CD4-positive, alpha-beta memory T cell (primary cell): ENCODE measurements at regions of chr7 and their contacts with region 1.

Region 1: DNA sequence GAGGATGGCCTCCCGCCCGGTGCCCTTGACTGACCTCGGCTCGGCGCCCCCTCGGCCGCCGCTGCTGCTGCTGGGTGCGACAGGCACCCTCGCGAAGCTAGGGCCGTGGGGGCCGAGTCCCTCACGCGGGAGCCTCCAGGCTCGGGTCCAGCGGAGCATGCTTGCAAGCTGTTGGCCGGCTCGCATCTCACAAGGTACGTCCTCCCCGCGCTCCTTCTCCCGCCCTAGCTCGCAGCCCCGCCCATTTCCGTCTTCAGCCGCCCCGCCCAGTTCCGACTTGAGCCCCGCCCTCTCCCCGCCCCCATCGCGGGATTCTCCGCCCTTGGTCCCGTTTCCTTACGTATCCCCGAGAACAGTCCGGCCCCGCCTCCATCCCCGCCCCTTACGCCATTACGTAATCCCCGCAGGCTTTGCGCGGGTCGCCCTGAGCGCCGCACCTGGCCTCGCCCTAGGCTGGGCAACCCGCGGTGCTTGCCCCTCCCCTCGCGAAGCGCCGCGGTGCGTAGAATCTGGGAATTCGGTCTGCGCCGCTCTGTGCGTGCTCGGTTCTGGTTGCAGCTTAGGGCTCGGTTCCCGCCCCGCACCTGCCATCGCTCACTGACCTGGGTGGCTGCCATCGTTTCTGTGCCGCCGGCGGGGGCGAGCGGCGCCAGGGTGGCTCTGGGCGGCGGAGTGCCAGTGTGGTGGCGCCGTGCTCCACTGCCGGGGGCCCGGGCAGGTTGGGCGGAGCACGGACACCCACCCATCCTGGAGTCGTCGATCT is at the start of gene ABHD11:
- DNase-seq: peak; percentile 96 to 99 (median 97)
- H3K4me3 ChIP-seq: peak within 1 kb of the TSS; percentile 65 to 78
- H3K4me3 Mint-ChIP-seq: peak within 1 kb of the TSS; percentile 88 to 95 (median 91)
- H3K27ac ChIP-seq: peak within 1 kb of the TSS; percentile 75
- H3K27ac Mint-ChIP-seq: peak within 1 kb of the TSS; percentile 89 to 96 (median 94)
- H3K4me1 ChIP-seq: peaks cover 21% of the 10 kb centered on the region
- H3K4me1 Mint-ChIP-seq: peaks cover 6 to 26% (median 13%) of the 10 kb centered on the region in 4 donors
- H3K27me3 ChIP-seq: no peaks in the 10 kb centered on the region
- H3K27me3 Mint-ChIP-seq: no peaks in the 10 kb centered on the region
- total RNA-seq, gene ABHD11: 22.3 to 23.9 TPM

Region 2: DNA sequence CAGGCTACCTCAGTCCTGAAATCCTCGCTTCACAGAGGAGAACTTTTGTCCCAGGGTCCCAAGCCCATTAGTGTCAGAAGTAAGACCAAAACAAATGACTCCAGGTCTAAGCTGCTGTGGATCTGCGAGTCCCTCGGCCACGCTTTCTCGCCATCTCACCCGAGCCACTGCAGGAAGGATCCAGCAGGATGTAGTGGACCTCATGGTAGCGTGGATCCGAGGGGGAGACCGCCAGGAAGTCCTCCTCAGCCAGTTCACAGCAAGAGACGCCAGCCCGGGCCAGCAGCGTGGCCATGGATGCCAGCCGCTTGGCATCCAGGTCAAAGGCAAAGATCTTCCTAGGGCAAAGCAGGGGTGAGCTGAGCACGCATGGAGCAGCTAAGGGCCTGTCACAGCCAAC is 434.7 kb before region 1 on chr7:
- CTCF ChIA-PET with region 1: no interaction called
- POLR2A ChIA-PET with region 1: no interaction called
- intact Hi-C with region 1: no loop called
- DNase-seq: no peak
- H3K4me3 ChIP-seq: no peak overlapping the region
- H3K4me3 Mint-ChIP-seq: no peak overlapping the region
- H3K27ac ChIP-seq: no peak overlapping the region
- H3K27ac Mint-ChIP-seq: no peak overlapping the region
- H3K4me1 ChIP-seq: peaks cover 12% of the 10 kb centered on the region
- H3K4me1 Mint-ChIP-seq: peaks cover 16 to 34% (median 24%) of the 10 kb centered on the region in 4 donors
- H3K27me3 ChIP-seq: no peaks in the 10 kb centered on the region
- H3K27me3 Mint-ChIP-seq: no peaks in the 10 kb centered on the region

Region 3: DNA sequence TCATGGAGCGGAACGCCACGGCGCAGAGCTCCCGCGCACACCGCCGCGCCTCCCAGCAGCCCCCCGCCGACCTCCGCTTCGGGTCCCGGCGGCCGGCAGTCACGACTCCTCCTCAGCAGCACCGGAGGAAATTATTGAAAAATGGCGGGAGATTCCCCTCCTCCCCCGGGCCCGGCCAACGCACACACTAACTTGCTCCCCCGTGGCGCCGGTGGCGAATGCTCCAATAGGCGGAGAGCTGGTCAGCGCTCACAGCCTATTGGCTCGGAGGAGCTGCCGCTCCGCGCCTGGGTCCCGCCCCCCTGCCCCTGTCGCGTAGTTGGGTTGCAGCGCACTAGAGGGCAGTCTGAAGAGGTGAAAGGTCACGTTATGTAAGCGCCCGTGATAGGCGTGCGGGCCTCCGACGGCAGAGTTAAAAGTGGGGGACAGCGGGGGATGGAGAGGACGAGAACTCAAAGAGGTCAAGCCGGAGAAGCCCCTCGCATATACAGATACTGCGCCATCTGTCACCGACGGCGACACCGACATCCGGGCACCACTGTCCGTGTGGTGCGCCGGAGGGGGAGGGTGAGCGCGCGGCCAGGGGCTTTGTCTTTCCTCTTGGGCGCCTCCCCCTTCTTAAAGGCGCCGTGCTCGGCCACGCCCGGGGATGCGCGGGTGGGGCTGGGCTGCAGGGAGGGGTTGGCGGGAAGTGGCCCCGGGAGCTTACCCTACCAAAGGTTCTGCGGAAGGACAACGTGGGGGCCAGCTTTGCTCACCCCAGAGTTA is 216.5 kb before region 1 on chr7 and contains the start of gene BAZ1B:
- CTCF ChIA-PET with region 1: no interaction called
- POLR2A ChIA-PET with region 1: interaction called, 11 read pairs
- intact Hi-C with region 1: loop called (anchors 2 kb)
- DNase-seq: peak; percentile 94 to 98 (median 95)
- H3K4me3 ChIP-seq: peak within 1 kb of the TSS; percentile 57 to 75
- H3K4me3 Mint-ChIP-seq: peak within 1 kb of the TSS; percentile 95 to 99 (median 96)
- H3K27ac ChIP-seq: peak within 1 kb of the TSS; percentile 84
- H3K27ac Mint-ChIP-seq: peak within 1 kb of the TSS; percentile 96 to 100 (median 99)
- H3K4me1 ChIP-seq: peaks cover 69% of the 10 kb centered on the region
- H3K4me1 Mint-ChIP-seq: peaks cover 49 to 74% (median 57%) of the 10 kb centered on the region in 4 donors
- H3K27me3 ChIP-seq: no peaks in the 10 kb centered on the region
- H3K27me3 Mint-ChIP-seq: peaks cover 0 to 2% of the 10 kb centered on the region in 2 donors
- total RNA-seq, gene BAZ1B: 75.3 to 78.6 TPM

Region 4: GRCh38 chr7:73578342-73579127 is 160.3 kb before region 1 on chr7 and contains the start of gene TBL2:
- CTCF ChIA-PET with region 1: no interaction called
- POLR2A ChIA-PET with region 1: interaction called, 12 read pairs
- intact Hi-C with region 1: loop called (anchors 1 kb)
- DNase-seq: peak; percentile 98 to 99 (median 98)
- H3K4me3 ChIP-seq: peak within 1 kb of the TSS; percentile 60 to 78
- H3K4me3 Mint-ChIP-seq: peak within 1 kb of the TSS; percentile 87 to 99 (median 96)
- H3K27ac ChIP-seq: peak within 1 kb of the TSS; percentile 82
- H3K27ac Mint-ChIP-seq: peak within 1 kb of the TSS; percentile 86 to 99 (median 98)
- H3K4me1 ChIP-seq: peaks cover 29% of the 10 kb centered on the region
- H3K4me1 Mint-ChIP-seq: peaks cover 13 to 37% (median 22%) of the 10 kb centered on the region in 4 donors
- H3K27me3 ChIP-seq: no peaks in the 10 kb centered on the region
- H3K27me3 Mint-ChIP-seq: no peaks in the 10 kb centered on the region
- total RNA-seq, gene TBL2: 45.4 to 47.5 TPM

Region 5: GRCh38 chr7:73667344-73668102 is 71.3 kb before region 1 on chr7 and contains the start of gene VPS37D:
- CTCF ChIA-PET with region 1: interaction called, 3 read pairs
- POLR2A ChIA-PET with region 1: interaction called, 5 read pairs
- intact Hi-C with region 1: loop called (anchors 1 kb)
- DNase-seq: peak; percentile 87 to 96 (median 91)
- H3K4me3 ChIP-seq: peak within 1 kb of the TSS in 1 of 2 donors; percentile 44
- H3K4me3 Mint-ChIP-seq: peak within 1 kb of the TSS; percentile 70 to 81 (median 76)
- H3K27ac ChIP-seq: no peak within 1 kb of the TSS
- H3K27ac Mint-ChIP-seq: peak within 1 kb of the TSS in 6 of 7 donors; percentile 48 to 70 (median 54)
- H3K4me1 ChIP-seq: peaks cover 10% of the 10 kb centered on the region
- H3K4me1 Mint-ChIP-seq: peaks cover 4 to 12% (median 7%) of the 10 kb centered on the region in 4 donors
- H3K27me3 ChIP-seq: peaks cover 13% of the 10 kb centered on the region
- H3K27me3 Mint-ChIP-seq: peaks cover 19 to 31% of the 10 kb centered on the region in 2 donors
- total RNA-seq, gene VPS37D: not detected

Region 6: DNA sequence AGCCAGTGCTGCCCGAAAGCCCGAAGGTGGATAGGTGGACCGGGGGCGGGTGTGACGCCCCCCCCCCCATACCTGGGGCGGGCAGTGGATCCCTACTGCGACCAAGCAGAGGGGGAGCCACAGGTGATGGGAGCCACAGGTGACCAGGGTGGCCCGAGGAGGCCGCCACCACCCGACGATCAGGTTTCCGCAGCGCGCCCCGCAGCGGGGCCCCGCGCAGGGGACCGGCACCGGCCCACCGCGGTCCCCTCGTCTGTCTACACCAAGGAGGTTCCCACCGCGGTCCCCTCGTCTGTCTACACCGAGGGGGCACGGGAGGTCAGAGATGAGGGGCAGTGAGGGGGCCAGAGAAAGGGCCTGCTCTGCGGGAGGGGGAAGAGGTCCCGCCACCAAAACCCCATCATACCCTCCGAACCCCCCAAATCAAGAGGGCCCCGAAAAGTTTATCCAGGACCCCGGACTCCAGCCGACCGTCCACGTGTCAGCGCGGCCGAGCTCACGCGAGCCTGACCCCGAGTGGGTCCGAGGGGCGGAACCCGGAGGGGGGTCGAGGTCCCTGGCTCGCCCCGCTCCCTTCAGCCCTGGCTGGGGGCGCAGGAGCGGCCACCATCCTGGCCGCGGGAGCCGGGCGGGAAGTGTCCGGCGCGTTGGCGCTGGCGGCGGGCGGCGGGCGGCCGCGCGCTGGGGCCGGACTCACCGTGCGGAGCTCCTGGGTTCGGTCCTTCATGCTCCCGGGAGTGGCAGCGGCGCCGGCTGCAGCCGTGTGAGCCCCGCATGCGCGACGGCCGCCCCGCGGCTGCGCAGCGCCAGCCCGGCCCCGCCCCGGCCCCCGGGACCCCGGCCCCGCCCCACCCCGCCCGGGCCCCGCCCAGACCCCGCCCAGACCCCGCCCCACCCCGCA is 19.6 kb before region 1 on chr7 and contains the start of gene STX1A:
- CTCF ChIA-PET with region 1: interaction called, 8 read pairs
- POLR2A ChIA-PET with region 1: interaction called, 10 read pairs
- intact Hi-C with region 1: loop called (anchors 1 kb)
- DNase-seq: peak; percentile 65 to 78 (median 71)
- H3K4me3 ChIP-seq: peak within 1 kb of the TSS; percentile 65 to 76
- H3K4me3 Mint-ChIP-seq: peak within 1 kb of the TSS; percentile 84 to 92 (median 91)
- H3K27ac ChIP-seq: peak within 1 kb of the TSS; percentile 46
- H3K27ac Mint-ChIP-seq: peak within 1 kb of the TSS in 5 of 7 donors; percentile 68 to 90 (median 72)
- H3K4me1 ChIP-seq: peaks cover 34% of the 10 kb centered on the region
- H3K4me1 Mint-ChIP-seq: peaks cover 13 to 29% (median 20%) of the 10 kb centered on the region in 4 donors
- H3K27me3 ChIP-seq: no peaks in the 10 kb centered on the region
- H3K27me3 Mint-ChIP-seq: no peaks in the 10 kb centered on the region
- total RNA-seq, gene STX1A: 7.5 to 8.3 TPM

Region 7: DNA sequence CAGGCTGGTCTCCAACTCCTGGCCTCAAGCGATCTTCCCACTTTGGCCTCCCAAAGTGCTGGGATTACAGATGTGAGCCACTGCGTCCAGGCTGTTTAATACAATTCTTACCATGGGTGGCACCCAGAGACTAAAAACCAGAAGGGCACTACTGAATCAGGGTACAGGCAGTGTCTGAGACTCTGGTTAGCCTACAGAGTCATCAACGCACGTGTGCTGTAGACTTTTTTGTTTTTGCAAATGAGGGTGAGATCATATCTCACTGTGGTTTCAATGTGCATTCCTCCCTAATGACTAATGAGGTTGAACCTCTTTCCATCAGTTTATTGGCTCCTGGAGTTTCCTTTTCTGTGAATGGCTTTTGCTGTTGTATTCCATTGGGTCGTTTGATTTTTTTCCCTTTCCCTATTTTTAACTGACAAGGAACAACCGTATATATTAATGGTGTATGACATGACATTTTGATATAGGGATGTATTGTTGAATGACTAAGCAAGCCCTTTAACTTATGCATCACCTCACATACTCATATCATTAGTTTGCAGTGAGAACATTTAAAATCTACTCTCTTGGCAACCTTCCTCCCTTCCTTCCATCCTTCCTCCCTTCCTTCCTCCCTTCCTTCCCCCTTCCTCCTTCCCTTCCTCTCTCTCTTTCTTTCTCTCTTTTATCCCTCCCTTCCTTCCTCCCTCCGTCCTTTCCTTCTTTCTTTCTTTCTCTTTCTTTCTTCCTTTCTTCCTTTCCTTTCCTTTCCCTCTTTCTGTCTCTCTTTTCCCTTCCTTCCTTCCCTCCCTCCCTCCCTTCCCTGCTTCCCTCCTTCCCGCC is 112.8 kb after region 1 on chr7:
- CTCF ChIA-PET with region 1: interaction called, 16 read pairs
- POLR2A ChIA-PET with region 1: no interaction called
- intact Hi-C with region 1: loop called (anchors 1 kb)
- DNase-seq: peak in 4 of 5 donors; percentile 15 to 53 (median 24)
- H3K4me3 ChIP-seq: no peak overlapping the region
- H3K4me3 Mint-ChIP-seq: peak overlapping the region in 2 of 8 donors; percentile 12 to 53
- H3K27ac ChIP-seq: no peak overlapping the region
- H3K27ac Mint-ChIP-seq: peak overlapping the region in 6 of 7 donors; percentile 7 to 65 (median 61)
- H3K4me1 ChIP-seq: peaks cover 17% of the 10 kb centered on the region
- H3K4me1 Mint-ChIP-seq: peaks cover 6 to 17% (median 11%) of the 10 kb centered on the region in 4 donors
- H3K27me3 ChIP-seq: no peaks in the 10 kb centered on the region
- H3K27me3 Mint-ChIP-seq: peaks cover 3 to 9% of the 10 kb centered on the region in 2 donors